GM13976 (cell line): ENCODE measurements at regions of chr14 and their contacts with region 1.

Region 1: DNA sequence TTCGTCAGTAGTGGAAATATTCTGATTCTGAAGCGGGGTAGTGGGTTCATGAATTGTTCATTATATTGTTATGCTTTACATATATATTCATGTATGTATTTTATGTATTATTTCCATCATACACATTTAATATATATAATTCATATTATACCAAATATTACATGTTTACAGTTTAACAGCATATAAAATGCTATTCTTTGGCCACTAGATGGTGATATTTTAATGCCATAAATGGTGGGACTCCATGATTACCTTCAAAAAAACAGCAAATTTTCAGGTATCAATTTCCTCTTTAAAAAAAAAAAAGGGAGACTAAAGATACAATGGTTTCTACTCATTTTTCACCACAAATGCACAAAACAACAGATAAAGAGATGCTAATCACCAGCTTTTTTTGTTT is 41.0 kb downstream of the BDKRB1 start:
- DNase-seq: peak; percentile 32
- CTCF ChIP-seq: peak; percentile 32

Region 2: GRCh38 chr14:96146131-96146806 is 150.7 kb before region 1 on chr14:
- in situ Hi-C with region 1: no loop called
- DNase-seq: no peak
- CTCF ChIP-seq: no peak

Region 3: GRCh38 chr14:96409701-96410100 is 112.7 kb after region 1 on chr14:
- in situ Hi-C with region 1: loop called (anchors 10 kb)
- DNase-seq: no peak
- CTCF ChIP-seq: no peak